ENCODE measurements at regions of chr1 and their contacts with region 1.

Region 1: GRCh38 chr1:180631766-180632325 is at the start of gene XPR1:
- DNase-seq: peak; percentile 98 to 99
- H3K4me3 ChIP-seq: peak within 1 kb of the TSS; percentile 51
- CTCF ChIP-seq: no peak
- POLR2A ChIP-seq: peak in 1 of 2 donors; percentile 58
- total RNA-seq, gene XPR1: 10.1 to 25.4 (median 14.1) TPM

Region 2: DNA sequence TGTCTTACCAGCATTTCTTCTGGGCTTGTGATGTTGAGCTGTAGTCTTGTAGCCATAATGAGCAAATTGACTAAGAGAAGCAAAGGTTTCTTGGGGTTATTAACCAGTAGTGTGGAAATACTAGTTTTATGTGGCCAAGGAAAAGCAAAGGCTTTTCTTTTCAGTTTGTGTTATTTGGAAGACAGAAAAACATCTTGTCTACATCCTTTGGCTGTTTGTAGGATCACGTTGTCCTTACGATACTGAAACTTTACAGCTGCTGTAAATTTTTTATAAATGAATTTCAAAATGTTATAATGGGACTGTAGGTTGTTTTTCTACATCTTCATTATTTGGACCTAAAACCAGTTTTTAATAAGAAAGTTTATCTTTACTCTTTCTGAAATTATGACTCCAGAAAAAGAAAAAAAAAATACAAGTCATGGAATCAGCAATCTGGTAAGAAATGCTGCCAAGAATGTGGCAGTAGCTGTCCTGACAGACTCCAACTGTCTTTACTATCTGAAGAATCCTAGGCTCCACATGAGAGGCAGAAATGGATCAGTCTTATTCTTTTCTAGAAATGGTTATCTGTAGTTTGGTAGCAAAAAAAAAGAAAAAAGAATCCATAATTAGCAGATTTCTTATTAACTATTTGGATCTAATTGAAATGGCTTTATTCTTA is 518.7 kb before region 1 on chr1:
- intact Hi-C with region 1: no loop called
- DNase-seq: no peak
- H3K4me3 ChIP-seq: no peak overlapping the region
- CTCF ChIP-seq: no peak
- POLR2A ChIP-seq: no peak

Region 3: DNA sequence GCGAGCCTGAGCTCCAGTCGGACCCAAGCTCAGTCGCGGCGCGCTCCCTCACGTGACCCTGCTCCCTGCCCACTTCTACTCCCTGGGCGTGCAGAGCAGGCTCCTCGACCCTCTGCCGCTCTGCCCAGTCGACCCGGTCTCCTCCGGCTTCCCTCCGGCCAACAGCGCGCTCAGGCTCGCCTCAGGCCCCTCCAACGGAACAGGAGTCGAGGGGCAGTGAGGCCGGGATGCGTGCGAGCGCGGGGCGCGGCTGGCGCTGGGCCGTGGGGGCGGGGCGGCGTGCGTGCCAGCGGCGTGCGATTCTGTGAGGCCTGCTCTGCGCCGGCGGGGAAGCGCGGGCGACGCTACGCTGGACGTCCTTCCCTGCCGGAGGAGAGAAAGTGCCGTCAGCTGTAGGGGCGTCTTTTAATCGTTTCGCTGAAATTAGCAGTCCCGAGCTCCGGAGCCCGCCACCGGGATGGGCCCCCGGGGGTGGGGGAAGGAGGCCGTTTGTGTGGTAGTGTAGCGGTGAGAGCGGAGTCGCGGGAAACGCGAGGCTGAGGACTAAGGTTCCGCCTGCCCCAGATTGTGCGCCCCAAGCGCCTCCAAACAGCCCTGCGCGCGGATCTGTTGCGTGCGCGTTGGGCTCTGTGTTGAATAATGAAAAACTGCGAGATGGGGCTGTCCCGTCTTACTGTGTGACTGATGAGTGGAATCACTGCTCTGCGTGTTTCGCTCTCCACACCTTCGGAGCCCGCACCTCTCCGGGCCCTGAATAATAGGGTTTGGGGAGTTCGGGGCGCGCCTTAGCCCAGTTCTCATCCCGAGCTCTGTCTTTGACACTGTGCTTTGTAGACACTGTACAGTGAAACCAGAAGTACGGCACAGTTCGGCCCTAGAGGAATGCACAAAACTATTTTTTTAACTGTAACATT is 129.2 kb before region 1 on chr1 and contains the start of gene ACBD6:
- intact Hi-C with region 1: loop called (anchors 10 kb)
- DNase-seq: peak; percentile 75 to 97
- H3K4me3 ChIP-seq: peak within 1 kb of the TSS; percentile 84
- CTCF ChIP-seq: no peak
- POLR2A ChIP-seq: no peak
- total RNA-seq, gene ACBD6: 31.3 to 43.1 (median 36.9) TPM

Measured in lower leg skin (tissue), 4 donors.